PC-3 (cell line): ENCODE measurements at regions of chr2 and their contacts with region 1.

Region 1: GRCh38 chr2:24490674-24491625 is at the start of gene NCOA1:
- DNase-seq: peak; percentile 82
- ATAC-seq: peak; percentile 84
- H3K4me3 ChIP-seq: peak within 1 kb of the TSS; percentile 88
- H3K27ac ChIP-seq: peak within 1 kb of the TSS; percentile 4; the same call in 1 of the 2 replicates
- H3K4me1 ChIP-seq: peaks cover 29% of the 10 kb centered on the region
- H3K27me3 ChIP-seq: no peaks in the 10 kb centered on the region
- CTCF ChIP-seq: no peak
- total RNA-seq, gene NCOA1: 7.5 and 8.2 TPM in 2 replicates

Region 2: DNA sequence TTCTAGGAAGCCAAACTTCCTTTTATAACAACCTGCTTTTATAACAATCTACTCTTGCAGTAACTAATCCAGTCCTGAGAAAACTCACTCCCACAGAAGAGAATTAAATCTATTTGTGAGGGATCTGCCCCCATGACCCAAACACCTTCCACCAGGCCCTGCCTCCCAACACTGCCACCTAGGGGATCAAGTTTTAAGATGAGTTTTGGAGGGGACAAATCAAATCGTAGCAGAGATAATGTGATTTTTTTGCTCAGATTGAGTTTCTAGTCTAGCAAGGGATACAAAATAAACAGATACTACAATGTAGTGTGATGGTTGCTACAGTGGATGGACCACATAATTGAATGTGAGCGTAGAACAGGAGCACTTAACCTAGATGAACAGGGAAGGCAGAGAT is 52.3 kb after region 1 on chr2:
- CTCF ChIA-PET with region 1: no interaction called
- POLR2A ChIA-PET with region 1: no interaction called
- intact Hi-C with region 1: loop called (anchors 5 kb)
- DNase-seq: peak; percentile 46
- ATAC-seq: no peak
- H3K4me3 ChIP-seq: no peak overlapping the region
- H3K27ac ChIP-seq: no peak overlapping the region
- H3K4me1 ChIP-seq: peaks cover 3% of the 10 kb centered on the region; the same call in 1 of the 2 replicates
- H3K27me3 ChIP-seq: no peaks in the 10 kb centered on the region
- CTCF ChIP-seq: peak; percentile 72

Region 3: GRCh38 chr2:24702800-24703199 is 211.8 kb after region 1 on chr2:
- CTCF ChIA-PET with region 1: no interaction called
- POLR2A ChIA-PET with region 1: no interaction called
- intact Hi-C with region 1: loop called (anchors 5 kb)
- DNase-seq: peak; percentile 93
- ATAC-seq: peak; percentile 100
- H3K4me3 ChIP-seq: no peak overlapping the region
- H3K27ac ChIP-seq: peak overlapping the region; percentile 62
- H3K4me1 ChIP-seq: peaks cover 14% of the 10 kb centered on the region
- H3K27me3 ChIP-seq: no peaks in the 10 kb centered on the region
- CTCF ChIP-seq: no peak

Region 4: DNA sequence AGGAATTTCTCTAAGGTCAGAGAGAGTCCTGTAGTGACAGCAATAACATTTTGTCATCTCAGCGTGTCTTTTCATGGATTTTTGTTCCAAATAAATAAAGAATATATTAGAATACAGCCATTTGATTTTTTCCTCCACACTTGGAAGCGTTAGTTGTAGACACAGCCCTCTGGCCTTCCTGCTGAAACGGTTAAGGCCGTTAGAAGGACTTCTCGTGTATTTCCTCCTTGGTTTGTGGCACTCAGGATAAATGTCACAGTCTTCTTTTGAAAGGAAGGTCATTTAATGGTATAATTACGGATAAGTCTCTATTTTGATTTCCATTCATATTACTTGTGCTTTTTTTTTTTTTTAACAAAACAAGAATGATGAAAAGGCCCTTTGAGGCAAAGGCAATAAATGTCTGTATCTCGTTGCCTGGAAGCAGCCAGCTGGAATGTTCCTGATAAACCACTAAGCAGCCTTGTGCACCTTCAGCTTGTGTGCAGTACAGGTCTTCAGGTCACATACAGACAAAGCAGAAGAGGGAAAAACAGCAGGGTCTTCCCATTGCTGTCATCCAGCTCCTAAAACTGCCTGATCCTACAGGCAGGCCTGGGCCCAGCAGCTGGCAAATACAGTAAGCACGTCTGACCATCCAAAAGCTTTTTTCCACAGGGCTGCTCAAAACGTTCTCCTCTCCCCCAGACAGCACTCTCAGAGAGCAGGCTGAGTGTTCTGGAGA is 565.3 kb after region 1 on chr2:
- CTCF ChIA-PET with region 1: no interaction called
- POLR2A ChIA-PET with region 1: no interaction called
- intact Hi-C with region 1: no loop called
- DNase-seq: no peak
- ATAC-seq: no peak
- H3K4me3 ChIP-seq: no peak overlapping the region
- H3K27ac ChIP-seq: no peak overlapping the region
- H3K4me1 ChIP-seq: no peaks in the 10 kb centered on the region
- H3K27me3 ChIP-seq: no peaks in the 10 kb centered on the region
- CTCF ChIP-seq: no peak